ENCODE measurements at regions of chr15 and their contacts with region 1.

Region 1: DNA sequence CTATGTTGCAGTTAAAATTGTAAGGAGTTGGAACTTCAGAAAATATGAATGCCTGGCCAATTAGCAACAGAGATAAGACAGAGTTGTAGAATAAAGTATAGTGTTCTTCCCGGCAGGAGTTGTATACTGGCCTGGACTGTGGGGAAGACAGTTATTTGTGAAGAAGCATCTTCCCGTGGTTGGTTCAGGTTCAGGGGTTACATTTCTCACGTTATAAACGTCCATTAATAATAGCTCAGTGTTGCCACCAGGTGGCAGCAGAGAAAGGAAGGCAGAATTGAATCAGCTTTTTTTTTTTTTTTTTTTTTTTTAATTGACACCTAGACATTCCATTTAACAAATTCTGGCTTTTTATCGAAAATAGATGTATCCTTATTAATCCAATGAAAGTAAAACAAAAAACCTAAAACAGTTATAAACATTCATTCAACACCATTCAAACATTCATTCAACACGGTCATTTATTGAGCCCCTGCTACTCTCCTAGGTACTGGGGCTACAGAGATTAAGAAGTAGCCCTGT is 66.4 kb upstream of the NR2E3 start:
- DNase-seq: peak; percentile 71
- H3K4me3 ChIP-seq: no peak overlapping the region
- H3K27ac ChIP-seq: no peak overlapping the region
- H3K4me1 ChIP-seq: no peaks in the 10 kb centered on the region
- CTCF ChIP-seq: peak; percentile 88

Region 2: GRCh38 chr15:71634820-71635560 is 108.9 kb before region 1 on chr15:
- CTCF ChIA-PET with region 1: no interaction called
- POLR2A ChIA-PET with region 1: no interaction called
- intact Hi-C with region 1: no loop called
- DNase-seq: no peak
- H3K4me3 ChIP-seq: no peak overlapping the region
- H3K27ac ChIP-seq: no peak overlapping the region
- H3K4me1 ChIP-seq: no peaks in the 10 kb centered on the region
- CTCF ChIP-seq: no peak

Region 3: GRCh38 chr15:71730277-71731144 is 13.4 kb before region 1 on chr15:
- CTCF ChIA-PET with region 1: no interaction called
- POLR2A ChIA-PET with region 1: no interaction called
- intact Hi-C with region 1: no loop called
- DNase-seq: peak; percentile 61
- H3K4me3 ChIP-seq: no peak overlapping the region
- H3K27ac ChIP-seq: no peak overlapping the region
- H3K4me1 ChIP-seq: no peaks in the 10 kb centered on the region
- CTCF ChIP-seq: peak; percentile 87

Region 4: DNA sequence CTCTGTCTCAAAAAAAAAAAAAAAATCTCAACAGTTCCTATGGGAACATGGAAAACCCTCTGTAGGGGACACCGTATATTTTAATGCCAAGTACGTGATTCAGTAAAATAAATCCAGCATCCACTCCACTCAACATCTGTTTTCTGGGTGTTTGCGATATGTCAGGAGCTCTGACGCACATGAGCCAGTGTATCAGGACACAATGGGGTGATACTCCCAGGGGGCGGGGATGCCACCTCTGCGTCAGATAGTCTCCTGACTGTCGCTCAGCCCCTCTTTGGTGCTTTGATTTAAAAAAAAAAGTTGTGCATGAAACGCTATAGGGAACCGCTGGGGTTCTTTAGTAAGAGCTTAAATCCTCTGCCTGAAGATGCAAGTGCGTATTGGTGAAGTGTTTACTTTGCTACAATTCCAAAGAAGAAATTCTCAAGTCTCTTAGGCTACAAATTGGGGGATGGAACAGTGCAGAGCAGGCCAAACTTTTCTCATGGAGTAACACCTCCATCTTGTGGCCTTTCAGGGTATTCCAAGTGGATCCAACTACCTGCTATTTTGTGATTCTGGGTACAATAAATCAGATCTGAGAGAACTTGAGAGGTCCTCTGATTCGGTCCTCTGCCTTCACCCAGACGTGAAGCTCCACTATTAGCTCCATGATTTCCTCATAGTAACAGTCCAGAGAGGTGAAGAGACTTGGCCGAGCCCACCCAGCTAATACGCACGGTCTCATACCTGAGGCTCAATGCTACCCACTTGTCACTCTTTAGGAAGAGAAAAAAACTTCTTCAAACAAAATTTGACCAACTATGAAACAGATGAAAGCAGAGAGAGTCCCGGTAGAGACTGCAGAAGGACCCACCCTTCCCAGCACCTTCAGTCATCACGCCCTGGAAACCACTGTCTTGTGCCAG is 57.2 kb after region 1 on chr15:
- CTCF ChIA-PET with region 1: no interaction called
- POLR2A ChIA-PET with region 1: no interaction called
- intact Hi-C with region 1: loop called (anchors 1 kb)
- DNase-seq: peak; percentile 49
- H3K4me3 ChIP-seq: no peak overlapping the region
- H3K27ac ChIP-seq: no peak overlapping the region
- H3K4me1 ChIP-seq: peaks cover 7% of the 10 kb centered on the region
- CTCF ChIP-seq: peak; percentile 85